A549 (cell line): ENCODE measurements at regions of chr7 and their contacts with region 1.

Region 1: DNA sequence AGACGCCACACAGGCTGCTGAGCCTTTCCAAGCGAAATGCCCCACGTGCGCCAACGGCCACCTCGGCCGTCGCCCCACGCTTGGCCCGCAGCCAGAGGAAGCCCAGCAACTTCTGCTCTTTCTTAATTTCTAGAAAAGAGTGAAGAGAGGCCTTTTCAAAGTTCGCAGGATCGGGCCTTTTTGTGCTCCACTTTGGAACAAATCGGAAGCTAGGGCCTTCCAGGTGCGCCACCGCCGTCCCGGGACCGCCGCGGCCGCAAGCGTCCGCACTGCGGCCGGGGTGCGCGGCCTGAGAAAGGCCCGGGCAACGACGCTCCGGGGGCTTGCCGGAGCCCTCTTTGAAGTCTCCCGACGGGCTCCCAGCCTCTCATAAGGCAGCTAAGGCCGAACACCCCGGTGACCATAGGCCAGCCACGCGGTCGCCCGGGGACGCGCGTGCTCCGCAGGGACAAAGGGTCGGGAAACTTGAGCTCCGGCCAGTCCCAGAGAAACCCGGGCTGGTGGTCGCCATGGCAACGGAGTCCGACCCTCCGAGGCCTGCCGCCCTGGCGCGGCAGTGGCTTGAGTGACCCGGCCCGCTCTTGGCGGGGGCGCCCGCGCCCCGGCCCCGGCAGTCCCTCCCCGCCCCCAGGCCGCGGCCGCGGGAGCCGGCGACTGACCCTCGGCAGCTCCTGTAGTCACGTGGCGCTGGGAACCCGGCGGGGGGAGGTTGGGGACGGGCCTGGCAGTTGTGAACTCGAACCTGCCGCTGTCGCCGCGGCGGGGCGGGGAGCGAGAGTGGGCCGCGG is at the start of gene REPIN1:
- DNase-seq: peak; percentile 72 to 93
- ATAC-seq: peak; percentile 69 to 70
- H3K4me3 ChIP-seq: peak within 1 kb of the TSS; percentile 96
- H3K27ac ChIP-seq: peak within 1 kb of the TSS; percentile 96 to 100
- H3K4me1 ChIP-seq: peaks cover 19% of the 10 kb centered on the region; the same call in 2 of the 3 replicates
- CTCF ChIP-seq: no peak
- EP300 ChIP-seq: no peak
- POLR2A ChIP-seq: peak; percentile 43
- RAD21 ChIP-seq: no peak
- polyA plus RNA-seq, gene REPIN1: 48.1 and 58.0 TPM in 2 replicates

Region 2: GRCh38 chr7:150322833-150323681 is 45.2 kb before region 1 on chr7 and contains the starts of genes ACTR3C and LRRC61:
- CTCF ChIA-PET with region 1: no interaction called
- POLR2A ChIA-PET with region 1: no interaction called
- DNase-seq: no peak
- ATAC-seq: peak in 1 of 2 experiments; percentile 53; a peak in 3 of 6 replicates
- H3K4me3 ChIP-seq: peak within 1 kb of the TSS; percentile 35; the same call in 2 of the 3 replicates
- H3K27ac ChIP-seq: peak within 1 kb of the TSS in 1 of 2 experiments; percentile 58; a peak in 3 of 6 replicates
- H3K4me1 ChIP-seq: no peaks in the 10 kb centered on the region
- CTCF ChIP-seq: no peak
- EP300 ChIP-seq: no peak
- POLR2A ChIP-seq: no peak
- RAD21 ChIP-seq: no peak
- polyA plus RNA-seq, gene ACTR3C: 0.40 and 0.43 TPM in 2 replicates
- polyA plus RNA-seq, gene LRRC61: 0.22 and 0.46 TPM in 2 replicates

Region 3: GRCh38 chr7:150393325-150393724 is 25.0 kb after region 1 on chr7:
- CTCF ChIA-PET with region 1: no interaction called
- POLR2A ChIA-PET with region 1: no interaction called
- DNase-seq: no peak
- ATAC-seq: no peak
- H3K4me3 ChIP-seq: no peak overlapping the region
- H3K27ac ChIP-seq: no peak overlapping the region
- H3K4me1 ChIP-seq: no peaks in the 10 kb centered on the region
- CTCF ChIP-seq: no peak
- EP300 ChIP-seq: no peak
- POLR2A ChIP-seq: no peak
- RAD21 ChIP-seq: no peak

Region 4: DNA sequence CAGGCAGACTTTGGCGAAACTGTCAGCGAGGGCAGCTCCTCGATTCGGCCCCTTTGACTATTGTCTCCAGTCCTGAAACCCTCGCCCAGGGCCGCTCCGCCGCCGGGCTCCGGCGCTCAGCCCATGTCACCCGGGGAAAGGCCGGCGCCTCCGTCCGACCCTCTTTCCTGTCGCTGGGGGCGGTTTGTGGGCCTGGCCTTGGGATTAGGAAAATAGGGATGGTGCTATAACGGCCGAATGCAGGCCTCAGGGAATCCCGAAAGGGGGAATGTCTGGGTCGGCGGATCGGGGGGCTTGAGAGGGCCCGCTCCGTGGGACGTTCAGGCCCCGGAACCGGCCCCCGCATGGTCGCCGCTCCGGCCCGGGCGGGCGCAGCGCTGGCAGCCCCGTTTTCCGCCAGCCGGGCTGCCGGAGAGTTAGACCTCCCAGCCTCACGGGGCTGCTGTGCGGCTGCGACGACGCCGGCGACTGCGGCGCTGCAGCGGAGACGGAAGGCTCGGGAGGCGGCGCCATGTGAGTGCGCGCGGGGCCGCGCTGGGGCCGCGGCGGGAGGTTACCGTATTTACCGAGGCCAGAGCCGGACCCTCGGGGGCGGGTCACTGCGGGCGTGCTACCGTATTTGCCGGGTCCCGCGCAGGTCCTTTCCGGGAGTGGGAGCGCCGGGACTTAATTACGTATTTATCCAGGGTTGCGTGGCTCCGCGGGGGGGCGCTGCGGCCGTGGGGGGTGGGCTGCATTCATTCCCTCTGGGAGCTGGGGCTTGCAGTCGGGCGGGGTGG is 36.7 kb after region 1 on chr7:
- CTCF ChIA-PET with region 1: interaction called, 6 read pairs
- POLR2A ChIA-PET with region 1: interaction called, 20 read pairs
- DNase-seq: peak; percentile 84 to 88
- ATAC-seq: peak; percentile 80 to 92
- H3K4me3 ChIP-seq: peak overlapping the region; percentile 69
- H3K27ac ChIP-seq: peak overlapping the region; percentile 92 to 97
- H3K4me1 ChIP-seq: peaks cover 39% of the 10 kb centered on the region
- CTCF ChIP-seq: peak; percentile 35; the same call in 2 of the 3 replicates
- EP300 ChIP-seq: no peak
- POLR2A ChIP-seq: peak; percentile 72
- RAD21 ChIP-seq: no peak; a peak in 2 of 5 replicates